Panc1 (cell line): ENCODE measurements at regions of chr12 and their contacts with region 1.

Region 1: DNA sequence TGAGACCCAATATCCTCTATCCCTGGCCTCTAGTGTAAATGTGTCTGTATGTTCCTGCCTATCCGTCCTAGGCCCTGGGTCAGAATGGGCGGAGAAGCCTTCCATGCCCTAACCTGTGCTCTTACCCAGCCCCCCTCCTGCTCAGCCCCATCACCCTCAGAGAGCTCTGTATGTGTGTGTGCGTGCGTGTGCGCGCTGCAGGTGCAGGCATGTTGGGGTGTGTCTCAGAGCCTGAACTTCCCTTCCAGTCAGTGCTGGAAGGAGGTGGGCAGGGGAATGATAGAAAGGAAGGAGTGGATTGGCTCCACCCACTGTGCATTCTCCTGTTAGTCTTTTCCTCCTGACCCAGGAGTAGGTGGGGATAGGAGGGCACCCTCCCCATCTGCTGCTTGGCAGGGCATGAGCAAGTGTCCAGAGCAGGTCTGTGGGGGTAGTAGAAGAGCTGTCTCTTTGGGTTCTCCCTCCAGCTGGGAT is 7.2 kb downstream of the NAB2 start:
- DNase-seq: no peak
- ATAC-seq: no peak
- H3K4me3 ChIP-seq: no peak overlapping the region
- H3K27ac ChIP-seq: no peak overlapping the region
- H3K4me1 ChIP-seq: peaks cover 2% of the 10 kb centered on the region; the same call in 1 of the 2 replicates
- H3K27me3 ChIP-seq: no peaks in the 10 kb centered on the region
- CTCF ChIP-seq: no peak

Region 2: DNA sequence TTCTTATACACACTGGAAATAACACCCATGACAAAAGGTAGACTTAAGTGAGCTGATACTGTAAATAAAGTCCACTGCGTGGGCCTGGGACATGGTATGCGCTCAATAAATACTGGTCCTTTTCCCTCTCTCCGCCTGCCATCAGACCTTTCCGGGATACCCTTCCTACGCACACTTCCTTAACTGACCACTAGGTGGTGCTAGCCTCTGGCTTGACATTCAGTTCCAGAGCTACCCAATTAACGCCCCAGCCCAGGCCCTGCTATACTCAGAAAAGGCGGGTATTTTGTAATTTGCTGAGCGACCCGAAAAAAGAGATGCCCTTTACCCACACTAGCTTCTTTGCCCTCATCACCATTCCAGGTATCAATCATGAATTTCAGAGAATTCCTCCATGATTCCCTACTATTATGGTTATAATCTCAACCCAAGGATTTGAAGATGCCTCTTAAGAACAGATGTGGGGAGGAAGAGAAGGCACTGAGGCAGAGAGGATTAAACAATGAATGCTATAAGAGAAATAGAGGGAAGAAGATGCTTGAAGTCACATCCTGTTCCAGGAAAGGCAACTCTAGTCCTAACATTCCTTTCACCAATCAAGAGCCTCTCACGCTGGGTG is 28.2 kb after region 1 on chr12:
- CTCF ChIA-PET with region 1: no interaction called
- POLR2A ChIA-PET with region 1: no interaction called
- in situ Hi-C with region 1: no loop called
- intact Hi-C with region 1: no loop called
- DNase-seq: peak; percentile 53
- ATAC-seq: peak; percentile 68
- H3K4me3 ChIP-seq: no peak overlapping the region
- H3K27ac ChIP-seq: no peak overlapping the region
- H3K4me1 ChIP-seq: 0 out of 2 replicates have a peak, but pooled peaks cover 3% of the 10 kb centered on the region
- H3K27me3 ChIP-seq: 0 out of 2 replicates have a peak, but pooled peaks cover 3% of the 10 kb centered on the region
- CTCF ChIP-seq: peak; percentile 96

Region 3: DNA sequence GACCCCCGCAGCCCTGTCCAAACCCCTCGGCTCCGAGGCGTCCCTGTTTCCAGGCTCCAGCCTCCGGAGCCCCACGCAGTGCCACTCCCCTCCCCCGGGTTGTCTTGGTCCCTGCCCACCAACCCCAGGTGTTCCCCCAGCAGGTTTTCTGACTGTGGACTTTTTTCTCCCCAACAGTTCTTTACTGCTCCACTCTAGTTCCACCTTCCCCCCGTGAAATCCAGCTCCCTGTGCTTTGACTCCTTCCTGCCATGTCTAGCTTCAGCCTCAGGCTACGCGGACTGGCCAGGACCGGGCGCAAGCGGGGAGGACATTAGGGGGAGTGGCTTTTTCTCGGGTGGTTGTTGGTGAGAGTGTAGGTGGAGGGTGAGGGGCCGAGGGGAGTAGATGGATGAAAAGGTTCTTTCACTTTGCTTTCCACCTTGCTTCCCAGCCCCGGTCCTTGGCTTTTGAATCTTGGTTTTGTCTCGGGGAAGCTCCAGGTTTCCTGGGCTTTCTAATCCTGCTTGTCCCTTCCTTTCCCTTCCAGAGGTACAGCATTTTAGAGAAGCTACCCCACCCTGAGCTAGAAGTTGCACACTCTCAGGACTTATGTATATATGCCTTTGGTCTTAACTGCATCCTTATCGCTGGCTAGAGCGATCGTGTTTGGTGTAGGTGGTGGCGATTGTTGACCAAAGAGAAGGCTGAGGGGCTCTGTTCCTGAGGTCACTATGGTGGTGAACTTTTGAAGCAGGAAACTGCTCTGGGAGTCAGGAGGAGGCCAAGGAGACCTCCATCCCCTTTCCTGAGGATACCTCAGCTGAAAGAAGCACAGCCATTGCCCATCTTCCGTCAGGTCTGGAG is 495.6 kb after region 1 on chr12:
- CTCF ChIA-PET with region 1: no interaction called
- POLR2A ChIA-PET with region 1: interaction called, 13 read pairs
- in situ Hi-C with region 1: no loop called
- intact Hi-C with region 1: no loop called
- DNase-seq: no peak
- ATAC-seq: peak; percentile 79
- H3K4me3 ChIP-seq: peak overlapping the region; percentile 94 to 97
- H3K27ac ChIP-seq: peak overlapping the region; percentile 87
- H3K4me1 ChIP-seq: peaks cover 15% of the 10 kb centered on the region
- H3K27me3 ChIP-seq: no peaks in the 10 kb centered on the region
- CTCF ChIP-seq: no peak